Dorsolateral prefrontal cortex (tissue), 120 donors: ENCODE measurements at regions of chr1 and their contacts with region 1.

Region 1: DNA sequence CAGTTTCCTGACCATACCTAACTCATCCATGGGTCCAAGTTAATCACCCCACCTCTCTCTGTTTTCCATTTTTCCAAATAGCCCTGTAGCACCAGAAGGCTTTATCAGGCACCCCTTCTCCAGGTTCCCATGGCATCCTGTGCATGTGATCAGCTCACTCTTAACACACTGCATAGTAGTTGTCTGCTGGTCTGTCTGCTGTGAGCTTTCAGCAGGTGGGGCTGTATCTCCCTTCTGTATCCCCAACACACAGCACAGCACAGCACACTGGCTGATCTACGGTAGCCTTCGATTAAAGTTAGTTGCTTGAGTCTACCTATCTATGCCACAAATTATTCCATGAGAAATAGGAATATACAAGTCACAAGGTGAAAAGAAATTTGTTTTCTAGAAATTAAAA is 54.3 kb upstream of the C1orf198 start:
- DNase-seq: no peak
- H3K4me3 ChIP-seq: no peak overlapping the region
- H3K27ac ChIP-seq: no peak overlapping the region
- H3K27me3 ChIP-seq: no peaks in the 10 kb centered on the region
- CTCF ChIP-seq: no peak

Region 2: DNA sequence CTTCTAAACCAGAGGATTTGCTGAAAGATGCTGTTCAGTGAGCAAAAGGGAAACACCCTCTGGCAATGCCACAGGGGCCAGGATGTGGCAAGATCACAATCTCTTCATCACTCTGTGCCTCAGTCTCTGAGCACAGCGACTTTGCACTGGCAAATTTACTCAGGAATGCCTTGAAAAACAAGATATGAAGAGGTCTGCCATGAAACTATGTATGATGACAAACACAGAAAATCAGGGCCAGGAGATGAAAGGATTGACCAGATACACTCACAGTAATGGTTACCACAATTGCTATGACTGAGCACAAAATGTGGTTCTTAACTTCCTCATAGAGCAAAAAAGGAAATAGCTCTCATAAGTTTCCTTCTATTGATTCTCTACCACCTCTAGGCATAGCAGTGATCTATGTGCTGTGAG is 50.2 kb after region 1 on chr1:
- intact Hi-C with region 1: loop called in 1 of 2 experiments (anchors 5 kb)
- DNase-seq: no peak
- H3K4me3 ChIP-seq: no peak overlapping the region
- H3K27ac ChIP-seq: peak overlapping the region in 2 of 59 donors; percentile 23 to 32
- H3K27me3 ChIP-seq: no peaks in the 10 kb centered on the region
- CTCF ChIP-seq: no peak

Region 3: GRCh38 chr1:231053493-231054162 is 131.0 kb after region 1 on chr1:
- intact Hi-C with region 1: no loop called
- DNase-seq: peak in 3 of 10 donors; percentile 12 to 41 (median 36)
- H3K4me3 ChIP-seq: peak overlapping the region in 52 of 59 donors; percentile 0 to 59 (median 32)
- H3K27ac ChIP-seq: peak overlapping the region in 22 of 59 donors; percentile 10 to 68 (median 28)
- H3K27me3 ChIP-seq: no peaks in the 10 kb centered on the region
- CTCF ChIP-seq: no peak

Region 4: DNA sequence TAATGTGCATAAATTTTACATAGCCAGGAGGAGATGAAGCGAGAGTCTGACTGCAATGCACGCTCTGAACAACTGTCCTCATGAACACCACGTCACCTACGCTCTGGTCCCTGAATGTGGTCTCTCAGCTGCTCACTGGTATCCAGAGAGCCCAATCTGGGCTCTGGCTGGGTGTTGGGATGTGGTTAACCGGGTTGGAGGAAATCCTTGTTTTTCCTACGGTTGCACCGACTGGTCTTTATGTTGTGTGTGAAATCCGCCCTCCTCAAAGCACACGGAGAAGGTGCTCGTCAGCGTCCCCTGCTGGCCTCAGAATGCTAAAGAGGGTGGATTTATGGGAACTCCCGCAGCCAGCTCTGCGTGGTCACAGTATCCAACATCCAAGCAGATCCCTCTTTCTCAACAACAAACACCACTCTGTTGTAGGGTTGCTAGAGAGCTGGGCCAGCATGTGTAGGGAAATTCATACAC is 169.2 kb after region 1 on chr1:
- intact Hi-C with region 1: loop called in 1 of 2 experiments (anchors 5 kb)
- DNase-seq: no peak
- H3K4me3 ChIP-seq: no peak overlapping the region
- H3K27ac ChIP-seq: no peak overlapping the region
- H3K27me3 ChIP-seq: peaks cover 0 to 4% (median 0%) of the 10 kb centered on the region in 45 donors
- CTCF ChIP-seq: peak in 40 of 56 donors; percentile 13 to 51 (median 28)